SK-N-SH (cell line): ENCODE measurements at regions of chr16 and their contacts with region 1.

Region 1: DNA sequence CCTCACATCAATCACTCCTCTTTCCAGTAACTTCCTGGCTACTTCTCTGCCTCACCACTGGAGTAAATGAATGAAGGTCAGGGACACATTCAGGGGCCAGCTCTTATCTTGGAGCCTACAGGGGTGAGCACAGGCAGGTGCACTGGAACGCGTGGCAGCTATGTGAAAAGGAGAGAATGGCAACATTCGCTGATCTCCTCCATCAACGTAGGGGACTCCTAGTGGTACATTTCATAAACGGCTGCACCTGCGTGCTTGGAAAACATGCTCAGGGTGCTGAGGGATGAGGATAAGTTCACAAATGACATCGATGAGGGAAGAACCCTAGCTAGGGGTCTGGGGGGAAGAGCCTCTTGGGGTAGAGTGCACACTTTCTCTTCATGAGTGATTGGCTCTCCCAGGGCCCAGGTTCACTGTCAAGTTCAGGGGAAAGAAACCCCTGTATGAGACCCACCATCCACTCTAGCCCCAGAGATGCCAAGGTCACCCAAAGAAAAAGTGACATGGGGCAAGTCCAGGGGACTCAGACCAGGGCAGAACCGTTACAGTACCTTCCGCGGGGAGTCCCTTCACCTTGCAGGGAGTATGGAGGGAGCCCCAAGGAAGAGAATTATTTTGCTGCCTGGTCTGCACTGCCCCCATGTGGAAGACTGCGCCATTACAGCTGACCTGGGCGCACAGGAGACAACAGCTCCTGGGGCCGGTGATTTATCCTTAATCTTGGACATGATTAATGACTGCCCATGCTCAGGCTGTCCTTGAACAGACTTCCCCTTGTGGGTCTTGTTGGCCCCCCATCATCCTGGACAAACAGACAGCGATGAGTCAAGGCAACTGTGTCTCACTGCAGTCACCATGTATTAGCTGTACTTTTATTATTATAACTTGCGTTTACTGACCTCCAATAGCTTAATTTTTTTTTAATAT is 30.1 kb downstream of the VAC14 start:
- DNase-seq: peak; percentile 79
- H3K4me3 ChIP-seq: no peak overlapping the region; a peak in 1 of 4 replicates
- H3K27ac ChIP-seq: 0 out of 4 replicates have a peak overlapping the region, but pooled peaks of 1 of the 2 experiments have one; percentile 5
- H3K4me1 ChIP-seq: peaks cover 0 to 3% of the 10 kb centered on the region in 2 experiments; a peak in 1 of 4 replicates
- H3K27me3 ChIP-seq: no peaks in the 10 kb centered on the region
- CTCF ChIP-seq: peak; percentile 93
- EP300 ChIP-seq: no peak
- RAD21 ChIP-seq: peak; percentile 94

Region 2: GRCh38 chr16:70594576-70594975 is 176.3 kb before region 1 on chr16:
- CTCF ChIA-PET with region 1: no interaction called
- POLR2A ChIA-PET with region 1: no interaction called
- DNase-seq: no peak
- H3K4me3 ChIP-seq: no peak overlapping the region
- H3K27ac ChIP-seq: no peak overlapping the region
- H3K4me1 ChIP-seq: no peaks in the 10 kb centered on the region
- H3K27me3 ChIP-seq: no peaks in the 10 kb centered on the region
- CTCF ChIP-seq: no peak
- EP300 ChIP-seq: no peak
- RAD21 ChIP-seq: no peak

Region 3: DNA sequence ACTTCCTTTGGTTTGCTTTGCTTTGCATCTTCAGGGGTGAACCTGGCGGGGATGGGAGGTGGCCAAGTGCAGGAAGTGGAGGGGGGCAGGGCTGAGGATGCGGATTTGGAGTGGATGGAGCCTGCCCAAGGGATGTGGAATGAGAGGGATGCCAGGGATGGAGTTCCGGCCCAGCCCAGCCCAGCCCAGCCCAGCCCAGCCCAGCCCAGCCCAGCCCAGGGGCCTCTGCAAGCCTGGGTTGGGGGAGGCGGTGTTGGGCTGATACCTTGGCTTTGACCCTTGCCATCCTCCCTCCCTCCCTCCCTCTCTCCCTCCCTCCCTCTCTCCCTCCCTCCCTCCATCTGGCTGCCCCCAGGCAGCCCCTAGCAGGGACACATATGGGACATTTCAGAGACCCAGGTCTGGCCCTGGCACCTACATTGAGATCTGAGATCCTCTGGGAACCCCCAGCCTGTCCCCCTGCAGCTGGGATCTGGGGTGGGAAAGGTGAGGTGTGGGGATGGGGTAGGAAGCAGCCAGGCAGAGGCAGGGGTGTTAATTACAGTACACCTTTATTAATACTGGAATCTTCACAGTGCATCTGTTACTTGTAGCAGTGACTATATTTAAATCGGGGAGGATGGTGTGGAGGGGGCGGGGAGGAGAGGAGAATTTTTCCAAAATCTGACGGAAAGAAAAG is 110.1 kb before region 1 on chr16:
- CTCF ChIA-PET with region 1: interaction called, 57 read pairs
- POLR2A ChIA-PET with region 1: no interaction called
- DNase-seq: peak; percentile 72
- H3K4me3 ChIP-seq: no peak overlapping the region
- H3K27ac ChIP-seq: no peak overlapping the region
- H3K4me1 ChIP-seq: peaks cover 0 to 8% of the 10 kb centered on the region in 2 experiments; a peak in 1 of 4 replicates
- H3K27me3 ChIP-seq: no peaks in the 10 kb centered on the region
- CTCF ChIP-seq: no peak
- EP300 ChIP-seq: no peak
- RAD21 ChIP-seq: no peak

Region 4: GRCh38 chr16:70703041-70703834 is 67.7 kb before region 1 on chr16:
- CTCF ChIA-PET with region 1: interaction called, 24 read pairs
- POLR2A ChIA-PET with region 1: interaction called, 3 read pairs
- DNase-seq: peak; percentile 88
- H3K4me3 ChIP-seq: no peak overlapping the region
- H3K27ac ChIP-seq: peak overlapping the region; percentile 96
- H3K4me1 ChIP-seq: peaks cover 54 to 73% of the 10 kb centered on the region in 2 experiments; a peak in 3 of 4 replicates
- H3K27me3 ChIP-seq: no peaks in the 10 kb centered on the region
- CTCF ChIP-seq: peak; percentile 57
- EP300 ChIP-seq: peak in 1 of 2 experiments; percentile 44; a peak in 1 of 4 replicates
- RAD21 ChIP-seq: peak; percentile 50

Region 5: GRCh38 chr16:70737377-70738082 is 33.4 kb before region 1 on chr16:
- CTCF ChIA-PET with region 1: interaction called, 33 read pairs
- POLR2A ChIA-PET with region 1: interaction called, 4 read pairs
- DNase-seq: peak; percentile 96
- H3K4me3 ChIP-seq: no peak overlapping the region
- H3K27ac ChIP-seq: peak overlapping the region; percentile 87 to 99
- H3K4me1 ChIP-seq: peaks cover 26 to 64% of the 10 kb centered on the region in 2 experiments
- H3K27me3 ChIP-seq: no peaks in the 10 kb centered on the region
- CTCF ChIP-seq: no peak
- EP300 ChIP-seq: peak; percentile 27 to 82; a peak in 3 of 4 replicates
- RAD21 ChIP-seq: no peak; the same call in none of the 2 replicates

Region 6: DNA sequence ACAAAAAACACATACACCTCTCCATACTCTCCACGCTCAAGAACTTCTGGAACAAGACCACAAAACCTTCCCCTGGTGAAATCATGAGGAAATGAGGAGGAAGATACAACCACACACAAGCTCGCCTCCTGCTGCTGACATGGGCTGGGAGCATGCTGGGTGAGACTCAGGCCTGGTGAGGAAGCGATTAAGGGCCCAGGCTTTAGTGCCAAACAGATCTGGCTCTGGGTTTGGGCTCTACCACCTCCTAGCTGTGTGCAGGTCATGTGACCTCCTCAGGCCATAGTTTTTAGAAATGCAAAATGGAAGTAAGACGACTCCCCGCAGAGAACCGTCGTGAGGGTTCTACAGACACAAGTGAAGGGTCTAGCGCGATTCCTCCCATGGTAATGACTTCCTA is 11.2 kb before region 1 on chr16:
- CTCF ChIA-PET with region 1: interaction called, 54 read pairs
- POLR2A ChIA-PET with region 1: no interaction called
- DNase-seq: no peak
- H3K4me3 ChIP-seq: no peak overlapping the region
- H3K27ac ChIP-seq: peak overlapping the region in 1 of 2 experiments; percentile 80; a peak in 2 of 4 replicates
- H3K4me1 ChIP-seq: peaks cover 4 to 20% of the 10 kb centered on the region in 2 experiments; a peak in 3 of 4 replicates
- H3K27me3 ChIP-seq: no peaks in the 10 kb centered on the region
- CTCF ChIP-seq: no peak
- EP300 ChIP-seq: no peak
- RAD21 ChIP-seq: 0 out of 2 replicates have a peak, but pooled peaks have one; percentile 7

Region 7: DNA sequence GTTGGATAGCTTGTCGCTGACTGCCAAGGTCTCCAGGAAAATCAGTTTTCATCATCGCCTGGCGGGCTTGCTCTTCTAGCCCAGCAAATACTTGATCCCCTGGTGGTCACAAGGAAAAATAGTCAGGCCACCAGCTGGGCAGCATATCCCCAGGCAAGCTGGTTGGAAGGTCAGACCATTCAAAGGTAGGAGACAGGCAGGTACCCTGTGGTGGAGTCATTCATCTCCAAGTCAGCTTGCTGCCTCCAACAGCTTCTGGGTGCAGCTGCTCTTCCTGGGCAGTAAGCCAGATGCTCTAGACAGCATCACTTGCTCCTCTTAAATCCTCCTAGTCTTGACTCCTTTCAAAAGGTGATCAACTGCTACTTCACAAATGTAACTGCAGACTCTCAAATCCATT is 1097.0 kb after region 1 on chr16:
- CTCF ChIA-PET with region 1: no interaction called
- POLR2A ChIA-PET with region 1: no interaction called
- DNase-seq: no peak
- H3K4me3 ChIP-seq: no peak overlapping the region
- H3K27ac ChIP-seq: no peak overlapping the region
- H3K4me1 ChIP-seq: no peaks in the 10 kb centered on the region; a peak in 1 of 4 replicates
- H3K27me3 ChIP-seq: no peaks in the 10 kb centered on the region
- CTCF ChIP-seq: peak; percentile 15; the same call in 1 of the 2 replicates
- EP300 ChIP-seq: no peak
- RAD21 ChIP-seq: no peak